Common myeloid progenitor, CD34-positive (primary cell): ENCODE measurements at regions of chr7 and their contacts with region 1.

Region 1: DNA sequence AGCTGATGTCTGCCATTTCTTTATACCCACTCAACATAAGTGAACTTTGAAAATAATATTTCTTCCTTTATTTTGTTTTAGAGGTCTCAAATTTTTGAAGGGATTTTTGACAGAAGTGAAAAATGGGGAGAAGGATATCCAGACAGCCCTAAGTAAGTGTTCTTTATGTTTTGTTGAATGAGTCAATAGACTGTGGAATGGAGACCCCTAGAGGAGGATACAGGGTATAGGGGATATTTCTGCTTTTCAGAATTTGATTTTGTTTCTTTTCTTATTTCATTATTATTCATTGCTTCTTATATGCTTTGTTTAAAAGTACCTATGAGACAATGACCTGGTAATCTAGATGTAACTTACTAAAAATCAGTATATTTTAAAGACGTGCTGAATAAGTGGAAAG is 34.4 kb downstream of the PLEKHA8 start:
- DNase-seq: peak; percentile 54 to 69 (median 68)
- H3K4me3 ChIP-seq: no peak overlapping the region
- H3K27ac ChIP-seq: no peak overlapping the region
- H3K4me1 ChIP-seq: no peaks in the 10 kb centered on the region
- H3K27me3 ChIP-seq: no peaks in the 10 kb centered on the region

Region 2: GRCh38 chr7:29921404-29922010 is 141.1 kb before region 1 on chr7:
- CTCF ChIA-PET with region 1: interaction called, 24 read pairs
- POLR2A ChIA-PET with region 1: no interaction called
- DNase-seq: peak; percentile 73 to 80 (median 75)
- H3K4me3 ChIP-seq: no peak overlapping the region
- H3K27ac ChIP-seq: no peak overlapping the region
- H3K4me1 ChIP-seq: no peaks in the 10 kb centered on the region
- H3K27me3 ChIP-seq: no peaks in the 10 kb centered on the region

Region 3: GRCh38 chr7:29946428-29947186 is 116.0 kb before region 1 on chr7:
- CTCF ChIA-PET with region 1: interaction called, 108 read pairs
- POLR2A ChIA-PET with region 1: no interaction called
- DNase-seq: peak; percentile 64 to 80 (median 71)
- H3K4me3 ChIP-seq: no peak overlapping the region
- H3K27ac ChIP-seq: no peak overlapping the region
- H3K4me1 ChIP-seq: no peaks in the 10 kb centered on the region
- H3K27me3 ChIP-seq: no peaks in the 10 kb centered on the region

Region 4: GRCh38 chr7:29955799-29956486 is 106.6 kb before region 1 on chr7:
- CTCF ChIA-PET with region 1: interaction called, 108 read pairs
- POLR2A ChIA-PET with region 1: no interaction called
- DNase-seq: peak; percentile 60 to 92 (median 90)
- H3K4me3 ChIP-seq: peak overlapping the region in 3 of 7 experiments; percentile 20 to 53 (median 35)
- H3K27ac ChIP-seq: no peak overlapping the region
- H3K4me1 ChIP-seq: peaks cover 10 to 22% (median 17%) of the 10 kb centered on the region in 4 experiments
- H3K27me3 ChIP-seq: no peaks in the 10 kb centered on the region

Region 5: DNA sequence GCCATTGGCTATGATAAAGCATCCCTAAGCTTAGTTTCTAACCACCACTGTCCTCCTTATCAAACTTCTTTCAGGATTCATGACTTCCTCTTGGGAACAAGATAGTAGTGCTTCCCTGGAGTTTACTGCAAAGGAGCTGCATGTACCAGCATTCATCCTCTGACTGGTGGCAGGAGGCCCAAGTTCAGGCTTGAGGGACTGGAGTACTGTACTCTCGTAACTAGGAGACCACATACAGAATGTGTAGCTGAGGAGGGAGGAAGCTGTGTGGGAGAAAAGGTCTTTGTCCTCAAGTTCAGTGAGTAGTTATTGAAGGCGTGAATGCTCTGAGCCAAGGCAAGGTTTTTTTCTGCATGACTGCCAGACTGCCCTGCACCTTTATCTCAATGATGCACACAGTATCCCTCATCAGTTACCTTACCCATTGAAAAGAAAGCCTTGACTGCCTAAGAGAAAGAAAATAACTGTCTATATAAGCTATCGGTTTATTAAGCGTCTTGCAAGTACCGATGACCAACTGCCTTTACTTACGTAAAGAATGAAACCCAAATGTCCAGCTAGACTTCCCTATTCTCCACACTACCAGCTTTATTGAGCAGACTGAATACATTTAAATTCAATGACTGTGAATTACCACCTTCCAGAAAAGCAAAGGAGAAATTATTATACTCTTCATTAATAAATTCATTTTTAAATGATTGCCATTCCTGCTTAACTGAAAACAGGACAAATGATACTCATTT is 85.7 kb before region 1 on chr7:
- CTCF ChIA-PET with region 1: interaction called, 14 read pairs
- POLR2A ChIA-PET with region 1: no interaction called
- DNase-seq: peak in 1 of 3 donors; percentile 14
- H3K4me3 ChIP-seq: no peak overlapping the region
- H3K27ac ChIP-seq: no peak overlapping the region
- H3K4me1 ChIP-seq: peaks cover 0 to 19% (median 5%) of the 10 kb centered on the region in 4 experiments
- H3K27me3 ChIP-seq: no peaks in the 10 kb centered on the region

Region 6: GRCh38 chr7:30026229-30027064 is 36.1 kb before region 1 on chr7 and contains the start of gene FKBP14:
- CTCF ChIA-PET with region 1: interaction called, 11 read pairs
- POLR2A ChIA-PET with region 1: no interaction called
- DNase-seq: peak; percentile 98 to 99 (median 99)
- H3K4me3 ChIP-seq: peak within 1 kb of the TSS; percentile 69 to 99 (median 93)
- H3K27ac ChIP-seq: peak within 1 kb of the TSS; percentile 81 to 89
- H3K4me1 ChIP-seq: peaks cover 12 to 40% (median 33%) of the 10 kb centered on the region in 4 experiments
- H3K27me3 ChIP-seq: no peaks in the 10 kb centered on the region

Region 7: DNA sequence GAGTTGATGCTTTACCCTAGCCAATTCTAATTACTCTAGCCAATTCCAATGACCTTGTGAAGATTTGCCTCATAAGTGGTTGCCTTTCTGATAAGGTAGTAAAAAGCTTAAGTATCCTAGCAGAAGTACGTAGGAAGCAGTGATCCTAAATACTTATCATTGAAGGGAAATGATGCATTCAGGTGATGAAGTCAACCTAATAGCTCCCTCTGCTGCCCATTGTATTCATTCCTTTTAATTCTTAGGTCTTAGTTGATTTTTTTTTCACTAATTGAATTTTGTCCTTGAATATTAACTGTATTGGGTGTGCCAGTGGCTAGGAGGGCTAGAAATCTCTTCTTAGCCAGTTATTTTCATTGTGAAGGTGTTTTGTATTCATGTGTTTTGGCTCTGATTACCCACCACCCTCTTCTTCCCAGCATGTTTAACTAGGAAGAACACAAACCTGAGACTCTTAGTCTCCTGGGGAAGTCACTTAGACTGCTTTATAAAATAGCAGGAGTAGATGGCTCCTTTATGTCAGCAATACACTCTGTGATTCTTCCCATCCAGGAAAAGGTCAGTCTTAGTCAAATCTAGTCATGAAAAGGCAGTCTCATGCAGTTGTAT is 11.9 kb after region 1 on chr7:
- CTCF ChIA-PET with region 1: interaction called, 44 read pairs
- POLR2A ChIA-PET with region 1: interaction called, 3 read pairs
- DNase-seq: peak; percentile 47 to 63 (median 54)
- H3K4me3 ChIP-seq: no peak overlapping the region
- H3K27ac ChIP-seq: no peak overlapping the region
- H3K4me1 ChIP-seq: no peaks in the 10 kb centered on the region
- H3K27me3 ChIP-seq: no peaks in the 10 kb centered on the region